ENCODE measurements at regions of chr9 and their contacts with region 1.

Region 1: GRCh38 chr9:613771-614347 is 227.6 kb upstream of the DMRT1 start:
- DNase-seq: peak; percentile 55 to 69 (median 66)
- ATAC-seq: peak; percentile 88
- H3K4me3 ChIP-seq: no peak overlapping the region
- H3K4me1 ChIP-seq: peaks cover 3% of the 10 kb centered on the region
- CTCF ChIP-seq: peak; percentile 17

Region 2: DNA sequence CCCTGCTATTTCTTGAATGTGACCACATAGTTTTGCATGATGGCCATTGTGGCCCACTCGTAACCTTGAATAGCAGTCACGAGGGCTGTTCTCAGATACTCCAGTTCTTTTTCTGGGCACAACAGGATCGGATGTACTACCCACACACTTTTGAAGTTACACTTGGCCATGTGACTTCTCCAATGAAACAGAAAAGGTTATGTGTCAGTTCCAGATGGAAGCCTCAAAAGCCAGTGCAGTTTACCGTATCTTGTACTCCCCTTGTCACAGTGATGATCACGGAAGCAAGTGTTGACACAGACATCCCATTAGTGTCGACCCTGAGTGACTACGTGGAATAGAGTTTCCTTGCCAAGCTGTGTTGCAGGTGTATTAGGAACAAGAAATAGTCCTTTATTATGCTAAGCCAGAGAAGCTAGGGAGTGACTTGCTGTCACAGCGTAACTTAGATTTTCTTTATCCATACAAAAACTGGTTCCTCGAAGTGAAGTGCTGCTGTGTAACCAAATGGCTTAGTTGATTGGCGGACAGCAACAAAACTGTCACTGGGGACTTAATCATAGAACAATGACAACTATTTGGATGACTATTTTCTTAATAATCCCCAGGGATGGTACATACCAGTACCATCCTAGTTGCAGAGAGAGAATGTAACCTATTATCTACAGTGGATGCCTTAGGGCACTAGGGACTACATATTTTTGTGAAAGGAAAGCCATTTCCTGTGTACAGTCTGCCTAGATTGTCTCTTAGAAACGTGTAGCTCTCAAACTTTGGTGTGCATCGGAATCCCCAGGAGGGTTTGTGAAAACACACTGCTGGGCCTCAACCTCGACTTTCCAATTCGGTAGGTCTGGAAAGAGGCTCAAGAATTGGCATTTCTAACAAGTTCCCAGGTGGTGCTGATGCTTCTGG is 137.5 kb after region 1 on chr9:
- intact Hi-C with region 1: loop called (anchors 5 kb)
- DNase-seq: peak in 1 of 3 donors; percentile 29
- ATAC-seq: peak; percentile 35
- H3K4me3 ChIP-seq: no peak overlapping the region
- H3K4me1 ChIP-seq: peaks cover 10% of the 10 kb centered on the region
- CTCF ChIP-seq: no peak

Region 3: DNA sequence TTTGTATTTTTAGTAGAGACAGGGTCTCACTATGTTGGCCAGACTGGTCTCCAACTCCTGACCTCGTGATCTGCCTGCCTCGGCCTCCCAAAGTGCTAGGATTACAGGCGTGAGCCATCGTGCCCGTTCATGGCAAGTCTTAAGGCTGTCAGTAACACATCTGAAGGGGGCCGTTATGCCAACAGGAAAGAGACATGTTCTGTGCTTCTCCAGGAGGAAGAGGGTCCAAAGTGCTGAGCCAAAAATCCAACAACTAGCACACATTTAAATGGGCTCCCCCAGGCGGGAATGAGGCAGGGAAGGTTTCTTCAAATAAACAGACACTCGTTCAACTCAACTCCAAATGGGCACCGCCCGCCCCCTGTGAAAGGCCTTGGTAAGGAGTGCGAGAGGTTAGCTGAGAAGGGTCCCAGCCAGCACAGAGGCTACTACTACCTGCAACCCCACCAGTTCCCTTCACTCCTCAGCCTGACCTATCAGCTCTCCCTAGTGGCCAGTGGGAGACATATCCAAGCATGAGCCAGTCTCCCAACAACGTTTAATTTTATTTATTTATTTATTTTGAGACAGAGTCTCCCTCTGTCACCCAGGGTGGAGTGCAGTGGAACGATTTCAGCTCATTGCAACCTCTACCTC is 143.5 kb after region 1 on chr9:
- intact Hi-C with region 1: loop called (anchors 5 kb)
- DNase-seq: peak in 1 of 3 donors; percentile 21
- ATAC-seq: peak; percentile 71
- H3K4me3 ChIP-seq: no peak overlapping the region
- H3K4me1 ChIP-seq: no peaks in the 10 kb centered on the region
- CTCF ChIP-seq: no peak

Region 4: GRCh38 chr9:763692-764524 is 150.0 kb after region 1 on chr9:
- intact Hi-C with region 1: loop called (anchors 5 kb)
- DNase-seq: peak in 2 of 3 donors; percentile 66 to 81
- ATAC-seq: peak; percentile 99
- H3K4me3 ChIP-seq: no peak overlapping the region
- H3K4me1 ChIP-seq: no peaks in the 10 kb centered on the region
- CTCF ChIP-seq: peak; percentile 78

Region 5: GRCh38 chr9:806285-807156 is 192.7 kb after region 1 on chr9:
- intact Hi-C with region 1: no loop called
- DNase-seq: peak in 1 of 3 donors; percentile 21
- ATAC-seq: peak; percentile 29
- H3K4me3 ChIP-seq: no peak overlapping the region
- H3K4me1 ChIP-seq: no peaks in the 10 kb centered on the region
- CTCF ChIP-seq: no peak

Measured in mucosa of descending colon (tissue), 3 donors.